Dorsolateral prefrontal cortex (tissue), 120 donors: ENCODE measurements at regions of chrX and their contacts with region 1.

Region 1: GRCh38 chrX:12974796-12975669 is at the start of gene TMSB4X:
- DNase-seq: peak; percentile 81 to 92 (median 89)
- H3K4me3 ChIP-seq: peak within 1 kb of the TSS; percentile 48 to 91 (median 75)
- H3K27ac ChIP-seq: peak within 1 kb of the TSS; percentile 66 to 98 (median 94)
- H3K27me3 ChIP-seq: peaks cover 0 to 60% (median 10%) of the 10 kb centered on the region in 45 donors
- CTCF ChIP-seq: peak in 6 of 56 donors; percentile 4 to 17 (median 8)
- total RNA-seq, gene TMSB4X: 1,088 to 2,217 (median 1,674) TPM

Region 2: GRCh38 chrX:12434493-12434892 is 540.5 kb before region 1 on chrX:
- intact Hi-C with region 1: no loop called
- DNase-seq: no peak
- H3K4me3 ChIP-seq: no peak overlapping the region
- H3K27ac ChIP-seq: no peak overlapping the region
- H3K27me3 ChIP-seq: peaks cover 0 to 37% (median 9%) of the 10 kb centered on the region in 45 donors
- CTCF ChIP-seq: no peak

Region 3: DNA sequence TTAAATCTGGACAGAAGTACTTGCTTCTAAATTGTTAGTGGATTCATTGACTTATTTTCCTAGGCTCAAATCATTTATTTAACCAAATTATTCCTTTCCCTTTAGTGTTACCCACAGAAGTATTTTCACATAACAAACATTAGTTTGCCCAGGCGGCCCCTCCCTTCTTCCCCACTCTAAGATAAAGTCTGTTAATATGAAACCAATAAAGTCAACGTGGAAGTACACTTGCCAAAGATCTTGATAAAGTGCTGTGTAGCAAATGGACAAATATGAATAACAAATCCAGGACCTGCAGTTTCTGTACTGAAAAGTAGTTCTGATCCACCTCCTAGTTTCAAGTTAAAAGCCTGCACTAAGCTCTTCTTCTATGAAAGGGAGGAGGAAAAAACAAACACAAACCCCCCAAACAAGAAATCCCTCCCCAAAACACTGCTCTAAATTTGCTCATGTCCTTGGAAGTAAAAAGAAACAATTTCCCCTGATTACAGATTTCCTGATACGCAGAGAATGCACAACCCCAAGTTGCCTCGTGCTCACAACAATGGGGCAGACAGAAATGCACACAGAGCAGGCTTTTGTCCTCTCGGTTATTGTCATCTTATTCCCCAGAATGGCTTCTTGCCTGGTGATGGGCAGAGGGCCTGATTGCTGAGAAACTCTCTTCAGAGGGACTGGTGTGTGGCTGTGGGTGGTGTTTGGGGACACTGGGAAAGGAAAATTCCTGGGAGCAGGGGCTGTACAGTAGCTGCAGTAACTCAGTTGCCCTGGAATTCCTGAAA is 23.1 kb after region 1 on chrX:
- intact Hi-C with region 1: loop called in 1 of 2 experiments (anchors 1 kb)
- DNase-seq: peak in 9 of 10 donors; percentile 31 to 81 (median 67)
- H3K4me3 ChIP-seq: peak overlapping the region in 20 of 59 donors; percentile 0 to 48 (median 20)
- H3K27ac ChIP-seq: peak overlapping the region in 58 of 59 donors; percentile 20 to 93 (median 81)
- H3K27me3 ChIP-seq: peaks cover 0 to 35% (median 3%) of the 10 kb centered on the region in 45 donors
- CTCF ChIP-seq: peak in 3 of 56 donors; percentile 9 to 19 (median 9)

Region 4: GRCh38 chrX:13051529-13052172 is 76.6 kb after region 1 on chrX:
- intact Hi-C with region 1: loop called in 1 of 2 experiments (anchors 2 kb)
- DNase-seq: no peak
- H3K4me3 ChIP-seq: no peak overlapping the region
- H3K27ac ChIP-seq: peak overlapping the region in 27 of 59 donors; percentile 8 to 72 (median 37)
- H3K27me3 ChIP-seq: peaks cover 0 to 45% (median 0%) of the 10 kb centered on the region in 45 donors
- CTCF ChIP-seq: no peak

Region 5: GRCh38 chrX:13092455-13092941 is 117.5 kb after region 1 on chrX:
- intact Hi-C with region 1: loop called in 1 of 2 experiments (anchors 5 kb)
- DNase-seq: no peak
- H3K4me3 ChIP-seq: no peak overlapping the region
- H3K27ac ChIP-seq: peak overlapping the region in 10 of 59 donors; percentile 2 to 83 (median 56)
- H3K27me3 ChIP-seq: peaks cover 0 to 42% (median 3%) of the 10 kb centered on the region in 45 donors
- CTCF ChIP-seq: no peak

Region 6: GRCh38 chrX:13487731-13488523 is 512.9 kb after region 1 on chrX:
- intact Hi-C with region 1: loop called (anchors 1 to 5 kb)
- DNase-seq: peak in 2 of 10 donors; percentile 21 to 32
- H3K4me3 ChIP-seq: no peak overlapping the region
- H3K27ac ChIP-seq: peak overlapping the region in 51 of 59 donors; percentile 8 to 81 (median 62)
- H3K27me3 ChIP-seq: peaks cover 0 to 65% (median 16%) of the 10 kb centered on the region in 45 donors
- CTCF ChIP-seq: peak; percentile 44 to 81 (median 68)